Right ventricle myocardium inferior (tissue), 1 donor: ENCODE measurements at regions of chr6 and their contacts with region 1.

Region 1: DNA sequence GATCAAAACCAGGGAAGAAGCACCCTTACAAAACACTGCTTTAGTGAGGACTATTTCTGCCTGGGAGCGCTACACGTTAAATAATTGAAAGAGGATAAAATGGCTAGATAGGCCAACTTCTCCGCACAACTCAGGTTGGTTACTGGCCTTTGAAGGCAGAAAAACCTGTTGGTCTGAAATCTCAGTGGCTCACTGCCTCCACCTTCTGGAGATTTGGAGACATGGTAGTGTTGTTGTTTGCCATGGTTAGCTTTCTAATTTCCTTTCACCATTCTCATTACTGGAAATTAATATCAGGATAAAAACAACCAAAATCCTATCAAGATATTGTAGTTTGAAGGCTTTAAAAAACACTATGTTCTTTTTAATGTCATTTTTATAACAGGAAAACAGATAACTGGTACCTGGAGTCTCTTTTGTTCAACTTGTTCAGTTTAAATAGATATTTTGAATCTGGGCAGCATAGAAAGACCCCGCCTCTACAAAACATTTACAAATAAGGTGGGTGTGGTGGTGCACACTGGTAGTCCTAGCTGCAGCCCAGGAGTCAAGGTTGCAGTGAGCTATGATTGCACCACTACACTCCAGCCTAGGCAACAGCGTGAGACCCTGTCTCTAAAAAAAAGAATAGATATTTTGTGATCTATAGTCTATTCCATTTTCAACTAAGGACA is 27.5 kb upstream of the BCLAF1 start:
- DNase-seq: no peak
- ATAC-seq: no peak

Region 2: DNA sequence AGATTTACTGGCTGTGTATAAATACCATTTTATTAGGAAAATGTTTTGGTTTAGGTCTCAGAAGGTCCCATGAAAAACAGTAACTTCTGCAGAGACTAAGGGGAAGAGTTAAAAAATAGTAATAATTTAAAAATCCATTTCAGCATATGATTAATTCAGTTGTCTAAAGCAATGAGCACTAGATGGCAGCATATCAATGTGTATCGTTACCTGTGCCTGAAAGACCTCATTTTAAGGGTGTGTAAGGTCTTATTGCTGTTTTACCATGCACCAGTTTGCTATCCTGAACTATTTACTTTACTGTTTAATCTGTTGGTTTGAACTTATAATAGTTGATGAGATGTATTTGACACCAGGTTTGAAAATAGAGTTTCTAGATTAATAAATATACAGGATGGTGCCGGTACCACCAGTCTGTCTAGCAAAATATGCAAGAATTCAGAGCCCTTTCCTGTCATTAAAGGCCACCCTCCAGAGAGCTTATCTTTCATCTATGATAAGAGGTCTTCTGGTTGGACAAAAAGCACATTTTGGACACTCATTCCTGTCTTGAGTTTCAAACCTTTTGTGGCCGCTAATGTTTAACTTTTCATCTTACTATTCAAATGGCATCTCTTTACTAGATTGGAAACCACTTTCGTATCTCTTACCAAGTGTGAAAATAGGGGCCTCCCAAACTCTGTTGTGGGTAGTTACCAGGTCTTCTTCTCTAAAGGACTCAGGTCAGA is 810.7 kb before region 1 on chr6:
- intact Hi-C with region 1: loop called (anchors 5 kb)
- DNase-seq: no peak
- ATAC-seq: no peak

Region 3: DNA sequence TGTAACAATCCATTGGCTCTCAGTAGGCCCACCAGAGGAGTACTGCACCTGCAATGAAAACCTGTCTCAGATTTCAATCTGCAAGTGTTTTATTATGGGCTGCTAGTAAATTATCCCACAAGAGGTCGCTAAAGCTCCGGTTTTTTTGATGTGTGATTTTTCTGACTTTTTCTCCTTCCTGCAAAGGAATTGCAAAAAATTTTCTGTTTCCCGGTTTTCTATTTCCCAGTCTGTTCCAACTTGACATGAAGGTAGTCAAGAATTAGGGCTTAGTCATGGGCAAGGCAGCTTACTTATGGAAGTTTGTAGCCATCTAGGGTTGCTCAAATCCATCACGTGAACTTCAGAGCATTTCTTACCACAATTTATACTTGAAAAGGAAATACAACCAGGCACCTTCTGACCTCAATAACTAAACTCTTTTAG is 781.2 kb before region 1 on chr6:
- intact Hi-C with region 1: loop called (anchors 5 kb)
- DNase-seq: no peak
- ATAC-seq: no peak